ENCODE measurements at regions of chr21 and their contacts with region 1.

Region 1: GRCh38 chr21:38505654-38506515 is 7.6 kb upstream of the ERG start:
- DNase-seq: peak; percentile 71
- ATAC-seq: peak; percentile 96
- H3K4me3 ChIP-seq: no peak overlapping the region
- H3K27ac ChIP-seq: no peak overlapping the region
- H3K4me1 ChIP-seq: no peaks in the 10 kb centered on the region
- H3K27me3 ChIP-seq: peaks cover 24% of the 10 kb centered on the region
- CTCF ChIP-seq: peak; percentile 79
- POLR2A ChIP-seq: no peak
- RAD21 ChIP-seq: peak; percentile 81

Region 2: DNA sequence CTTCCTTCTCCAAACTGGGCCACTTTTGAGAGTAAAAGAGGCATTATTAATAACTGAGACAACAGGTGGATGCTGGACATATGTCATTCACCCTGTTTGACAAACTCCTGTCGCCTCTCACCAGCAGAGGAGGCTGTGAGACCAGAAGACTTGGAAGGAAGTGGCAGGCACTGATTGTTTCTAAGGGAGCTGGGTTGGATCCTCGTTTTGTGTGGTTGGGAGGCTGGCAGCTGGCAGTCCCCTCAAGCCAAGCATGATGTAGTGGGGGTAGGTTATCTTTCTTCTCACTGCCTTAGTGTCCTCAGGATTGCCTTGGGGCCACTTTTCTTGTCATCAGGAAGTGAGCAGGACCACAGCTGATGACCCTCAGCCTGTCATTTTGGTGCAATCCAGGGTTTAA is 335.6 kb before region 1 on chr21:
- CTCF ChIA-PET with region 1: no interaction called
- POLR2A ChIA-PET with region 1: no interaction called
- dilution Hi-C with region 1: no loop called
- in situ Hi-C with region 1: no loop called
- intact Hi-C with region 1: no loop called
- DNase-seq: peak; percentile 12
- ATAC-seq: no peak
- H3K4me3 ChIP-seq: no peak overlapping the region
- H3K27ac ChIP-seq: no peak overlapping the region; the same call in 1 of the 2 replicates
- H3K4me1 ChIP-seq: peaks cover 15% of the 10 kb centered on the region
- H3K27me3 ChIP-seq: peaks cover 4% of the 10 kb centered on the region; the same call in 1 of the 2 replicates
- CTCF ChIP-seq: peak; percentile 44
- POLR2A ChIP-seq: no peak
- RAD21 ChIP-seq: peak; percentile 62

Region 3: GRCh38 chr21:38712071-38712470 is 206.2 kb after region 1 on chr21:
- CTCF ChIA-PET with region 1: no interaction called
- POLR2A ChIA-PET with region 1: no interaction called
- dilution Hi-C with region 1: no loop called
- in situ Hi-C with region 1: no loop called
- intact Hi-C with region 1: loop called (anchors 5 kb)
- DNase-seq: peak; percentile 27
- ATAC-seq: peak; percentile 40; the same call in 1 of the 2 replicates
- H3K4me3 ChIP-seq: no peak overlapping the region
- H3K27ac ChIP-seq: no peak overlapping the region
- H3K4me1 ChIP-seq: no peaks in the 10 kb centered on the region
- H3K27me3 ChIP-seq: peaks cover 36% of the 10 kb centered on the region
- CTCF ChIP-seq: peak; percentile 39
- POLR2A ChIP-seq: no peak
- RAD21 ChIP-seq: peak; percentile 28; the same call in 1 of the 2 replicates

Region 4: GRCh38 chr21:39175154-39175553 is 669.3 kb after region 1 on chr21:
- CTCF ChIA-PET with region 1: no interaction called
- POLR2A ChIA-PET with region 1: no interaction called
- dilution Hi-C with region 1: no loop called
- in situ Hi-C with region 1: loop called (anchors 10 kb)
- intact Hi-C with region 1: loop called (anchors 1 kb)
- DNase-seq: peak; percentile 40
- ATAC-seq: no peak; the same call in 1 of the 2 replicates
- H3K4me3 ChIP-seq: no peak overlapping the region
- H3K27ac ChIP-seq: no peak overlapping the region
- H3K4me1 ChIP-seq: peaks cover 2% of the 10 kb centered on the region; the same call in 1 of the 2 replicates
- H3K27me3 ChIP-seq: no peaks in the 10 kb centered on the region
- CTCF ChIP-seq: peak; percentile 59
- POLR2A ChIP-seq: no peak
- RAD21 ChIP-seq: peak; percentile 42

Region 5: DNA sequence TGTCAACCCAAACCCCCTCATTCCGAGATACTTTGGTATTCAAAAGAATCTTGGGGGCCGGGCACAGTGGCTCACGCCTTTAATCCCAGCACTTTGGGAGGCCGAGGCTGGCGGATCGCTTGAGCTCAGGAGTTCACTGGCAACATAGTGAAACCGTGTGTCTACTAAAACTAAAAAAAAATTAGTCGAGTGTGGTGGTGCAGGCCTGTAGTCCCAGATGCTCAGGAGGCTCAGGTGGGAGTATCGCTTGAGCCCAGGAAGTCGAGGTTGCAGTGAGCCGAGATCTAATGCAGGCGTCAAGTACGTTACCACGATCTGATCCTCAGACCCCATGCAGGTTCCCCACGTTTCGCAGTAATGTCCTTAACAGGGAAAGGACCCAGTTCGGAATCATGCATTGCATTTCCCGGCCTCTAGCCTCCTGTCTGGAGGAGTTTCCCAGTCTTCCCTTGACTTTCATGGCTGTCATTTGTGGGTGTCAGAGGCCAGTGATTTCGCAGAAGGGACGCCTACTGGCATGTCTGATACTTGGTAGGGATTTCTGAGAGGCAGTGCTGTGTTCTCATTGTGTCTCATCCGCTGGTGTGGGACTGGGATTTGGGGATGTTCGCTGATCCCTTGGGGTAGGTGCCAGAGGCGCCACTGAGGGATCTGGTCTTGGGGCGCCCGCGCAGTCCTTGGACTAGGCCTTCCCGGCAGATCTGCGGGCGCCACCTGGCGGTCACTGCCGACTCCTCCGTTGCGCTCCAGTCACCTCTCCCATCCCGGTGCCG is 882.3 kb after region 1 on chr21:
- CTCF ChIA-PET with region 1: no interaction called
- POLR2A ChIA-PET with region 1: no interaction called
- dilution Hi-C with region 1: no loop called
- in situ Hi-C with region 1: no loop called
- intact Hi-C with region 1: loop called (anchors 10 kb)
- DNase-seq: peak; percentile 77
- ATAC-seq: peak; percentile 82
- H3K4me3 ChIP-seq: peak overlapping the region; percentile 56
- H3K27ac ChIP-seq: peak overlapping the region; percentile 6; the same call in 1 of the 2 replicates
- H3K4me1 ChIP-seq: peaks cover 14% of the 10 kb centered on the region
- H3K27me3 ChIP-seq: no peaks in the 10 kb centered on the region
- CTCF ChIP-seq: peak; percentile 86
- POLR2A ChIP-seq: no peak
- RAD21 ChIP-seq: peak; percentile 84

Measured in IMR-90 (cell line).